HepG2 (cell line): ENCODE measurements at regions of chr12 and their contacts with region 1.

Region 1: DNA sequence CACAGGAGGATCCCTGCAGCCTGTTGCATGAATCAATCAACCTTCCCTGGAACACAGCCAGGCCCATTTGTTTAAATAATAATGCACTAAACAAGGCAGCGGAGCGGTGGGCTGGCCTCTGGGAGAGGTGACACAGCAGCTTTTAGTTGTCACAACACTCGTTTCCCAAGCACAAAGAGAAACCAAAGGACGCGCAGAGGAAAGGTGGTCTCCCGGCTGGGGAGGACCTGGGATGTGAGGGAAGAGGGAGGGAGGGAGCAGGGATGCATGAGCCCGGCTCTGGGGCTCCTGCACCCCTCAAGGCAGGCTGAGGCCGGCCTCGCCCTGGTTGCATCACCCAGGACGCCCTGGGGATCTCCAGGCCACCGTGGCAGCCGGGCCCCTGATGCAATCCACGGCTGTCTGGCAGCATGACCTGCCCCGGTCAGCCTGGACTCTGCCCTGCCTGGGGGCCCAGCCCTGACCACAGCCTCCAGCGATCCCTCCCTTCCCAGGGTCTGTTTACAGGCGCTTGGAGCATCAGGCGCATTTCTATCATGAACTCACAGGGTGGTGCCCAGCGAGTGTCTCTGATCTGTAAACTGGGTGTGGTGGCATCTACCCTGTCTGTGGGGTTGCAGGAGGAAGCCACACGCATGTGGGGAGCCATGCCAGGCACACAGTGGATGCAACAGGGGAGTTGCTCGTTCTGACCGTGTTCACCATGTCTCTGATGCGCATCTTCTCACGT is 32.5 kb downstream of the MMP17 start:
- DNase-seq: peak; percentile 94
- ATAC-seq: peak; percentile 92
- H3K4me3 ChIP-seq: peak overlapping the region; percentile 23 to 67 (median 57); a peak in 5 of 6 replicates
- H3K27ac ChIP-seq: peak overlapping the region; percentile 99
- H3K4me1 ChIP-seq: peaks cover 85% of the 10 kb centered on the region
- H3K27me3 ChIP-seq: peaks cover 0 to 6% of the 10 kb centered on the region in 2 experiments; a peak in 2 of 5 replicates
- CTCF ChIP-seq: peak; percentile 40
- EP300 ChIP-seq: peak; percentile 89 to 97
- POLR2A ChIP-seq: peak; percentile 73 to 86
- RAD21 ChIP-seq: no peak; the same call in none of the 2 replicates

Region 2: GRCh38 chr12:131894313-131894860 is 33.7 kb after region 1 on chr12 and contains the start of gene ULK1:
- CTCF ChIA-PET with region 1: no interaction called
- POLR2A ChIA-PET with region 1: interaction called, 11 read pairs
- in situ Hi-C with region 1: no loop called
- intact Hi-C with region 1: loop called (anchors 1 kb)
- DNase-seq: peak; percentile 70
- ATAC-seq: peak; percentile 43
- H3K4me3 ChIP-seq: peak within 1 kb of the TSS; percentile 66 to 82 (median 72)
- H3K27ac ChIP-seq: peak within 1 kb of the TSS; percentile 79
- H3K4me1 ChIP-seq: peaks cover 24% of the 10 kb centered on the region
- H3K27me3 ChIP-seq: peaks cover 2 to 3% of the 10 kb centered on the region in 2 experiments; a peak in 4 of 5 replicates
- CTCF ChIP-seq: no peak
- EP300 ChIP-seq: no peak
- POLR2A ChIP-seq: peak; percentile 67 to 69
- RAD21 ChIP-seq: peak; percentile 46; the same call in 1 of the 2 replicates
- total RNA-seq, gene ULK1: 1.7 and 2.8 TPM in 2 replicates

Region 3: DNA sequence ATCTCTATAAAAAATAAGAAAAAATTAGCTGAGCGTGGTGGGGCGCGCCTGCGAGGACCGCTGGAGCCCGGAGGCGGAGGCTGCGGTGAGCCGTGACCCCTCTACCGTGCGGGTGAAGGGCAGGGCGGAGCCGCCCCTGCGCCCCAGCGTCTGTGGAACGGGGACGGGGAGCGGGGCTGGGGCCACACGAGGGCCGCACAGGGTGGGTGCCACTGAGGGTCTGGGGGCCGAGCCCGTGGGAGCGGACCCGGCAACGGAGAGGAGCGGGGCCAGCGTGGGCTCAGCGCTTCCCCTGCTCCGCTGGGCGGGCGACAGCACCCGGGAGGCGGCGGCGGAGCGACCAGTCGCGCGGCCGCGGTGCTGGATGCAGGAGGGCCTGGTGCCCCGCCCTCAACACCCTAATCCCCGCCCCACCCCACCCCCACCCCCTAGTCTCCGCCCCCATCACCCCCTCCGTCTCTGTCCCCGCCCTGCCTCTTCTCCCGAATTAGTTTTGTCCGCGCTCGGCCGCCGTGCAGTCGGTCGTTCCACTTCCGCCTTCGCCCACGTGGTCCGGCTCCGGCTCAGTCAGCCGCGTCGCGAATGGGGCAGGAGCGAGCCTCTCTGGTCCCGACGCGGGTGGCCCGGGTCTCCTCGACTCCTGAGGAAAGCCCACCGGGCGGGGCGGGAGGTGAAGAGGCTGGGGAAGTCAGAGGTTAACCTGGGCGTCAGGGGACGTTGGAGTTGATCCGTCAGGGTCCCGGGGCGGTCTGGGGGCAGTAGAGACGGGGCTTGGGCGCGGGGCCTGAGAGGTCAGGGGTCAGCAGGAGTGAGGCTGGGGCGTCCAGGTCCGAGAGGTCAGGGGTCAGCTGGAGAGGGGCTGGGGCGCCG is 68.2 kb after region 1 on chr12 and contains the start of gene PUS1:
- CTCF ChIA-PET with region 1: no interaction called
- POLR2A ChIA-PET with region 1: interaction called, 18 read pairs
- in situ Hi-C with region 1: no loop called
- intact Hi-C with region 1: loop called (anchors 5 kb)
- DNase-seq: peak; percentile 88
- ATAC-seq: peak; percentile 81
- H3K4me3 ChIP-seq: peak within 1 kb of the TSS; percentile 78 to 92 (median 90)
- H3K27ac ChIP-seq: peak within 1 kb of the TSS; percentile 87
- H3K4me1 ChIP-seq: peaks cover 18% of the 10 kb centered on the region
- H3K27me3 ChIP-seq: no peaks in the 10 kb centered on the region
- CTCF ChIP-seq: no peak
- EP300 ChIP-seq: no peak
- POLR2A ChIP-seq: peak; percentile 65 to 93
- RAD21 ChIP-seq: no peak
- total RNA-seq, gene PUS1: 23.5 and 24.7 TPM in 2 replicates